Common myeloid progenitor, CD34-positive (primary cell): ENCODE measurements at regions of chr2 and their contacts with region 1.

Region 1: DNA sequence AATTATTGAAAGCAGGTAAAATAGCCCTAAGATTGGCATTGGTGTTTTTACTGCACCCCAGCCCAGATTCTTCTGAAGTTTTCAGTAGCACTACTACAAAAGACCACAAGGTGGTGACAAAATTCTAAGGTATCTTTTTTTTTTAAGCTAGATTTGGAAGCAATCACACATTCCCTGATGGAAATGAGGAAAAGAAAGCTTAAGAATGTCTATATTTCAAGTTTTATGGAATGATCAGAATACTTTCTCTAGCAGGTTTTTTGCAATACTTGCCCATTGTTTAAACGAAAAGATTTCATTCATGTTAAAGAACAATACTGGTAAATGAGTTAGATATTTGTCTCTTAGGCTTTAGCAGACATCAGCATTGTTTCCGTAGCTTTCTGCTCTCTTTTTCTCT is 32.1 kb upstream of the ZNF638 start:
- DNase-seq: peak; percentile 34 to 56 (median 42)
- H3K4me3 ChIP-seq: no peak overlapping the region
- H3K27ac ChIP-seq: no peak overlapping the region
- H3K4me1 ChIP-seq: no peaks in the 10 kb centered on the region
- H3K27me3 ChIP-seq: no peaks in the 10 kb centered on the region

Region 2: GRCh38 chr2:71157124-71157793 is 142.2 kb before region 1 on chr2:
- CTCF ChIA-PET with region 1: interaction called, 14 read pairs
- POLR2A ChIA-PET with region 1: no interaction called
- DNase-seq: peak; percentile 58 to 67 (median 64)
- H3K4me3 ChIP-seq: peak overlapping the region in 3 of 7 experiments; percentile 11 to 55 (median 30)
- H3K27ac ChIP-seq: no peak overlapping the region
- H3K4me1 ChIP-seq: peaks cover 0 to 9% (median 4%) of the 10 kb centered on the region in 4 experiments
- H3K27me3 ChIP-seq: peaks cover 0 to 6% (median 0%) of the 10 kb centered on the region in 5 experiments

Region 3: DNA sequence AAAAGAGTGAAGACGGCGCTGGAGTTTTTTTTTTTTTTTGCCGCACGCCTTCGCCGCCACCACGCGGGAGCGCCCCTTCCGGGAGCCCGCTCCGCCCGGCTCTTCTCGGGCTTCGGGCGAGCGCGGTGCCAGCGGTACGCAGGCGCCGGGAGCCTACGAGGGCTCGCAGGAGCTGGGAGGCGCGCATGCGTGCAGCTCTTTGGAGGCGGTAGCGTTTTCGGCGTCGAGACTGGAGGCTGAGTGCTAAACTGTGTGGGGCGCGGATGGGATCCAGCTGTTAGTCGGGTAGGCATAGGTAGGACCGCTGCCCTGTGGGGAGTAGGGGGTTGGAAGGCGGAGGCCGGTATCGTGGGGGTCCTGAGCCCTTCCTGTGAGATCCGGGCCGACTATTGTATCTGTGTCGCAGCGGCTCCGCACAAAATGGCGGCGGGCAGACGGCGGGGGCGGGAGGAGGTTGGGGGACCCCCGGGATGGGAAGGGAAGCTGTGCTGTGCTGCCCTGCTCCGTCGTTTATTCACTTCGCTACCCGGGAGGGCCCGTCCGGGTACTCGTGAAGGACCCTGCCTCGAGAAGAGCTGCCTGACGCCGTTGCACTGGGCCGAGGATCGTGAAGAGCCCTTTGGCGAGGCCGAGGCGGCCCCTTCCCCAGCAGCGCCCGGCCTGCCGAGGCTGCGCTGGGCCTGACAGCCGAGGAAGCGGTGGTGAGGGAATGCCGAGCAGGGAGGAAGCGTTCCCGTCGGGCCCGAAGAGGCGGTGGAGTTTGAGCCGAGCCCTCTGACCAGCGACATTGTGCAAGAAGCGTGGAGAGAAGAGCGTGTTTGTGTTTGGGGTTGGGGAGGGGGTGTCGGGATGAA is 32.3 kb after region 1 on chr2 and contains the start of gene ZNF638:
- CTCF ChIA-PET with region 1: interaction called, 37 read pairs
- POLR2A ChIA-PET with region 1: no interaction called
- DNase-seq: peak; percentile 93 to 98 (median 96)
- H3K4me3 ChIP-seq: peak within 1 kb of the TSS; percentile 65 to 98 (median 92)
- H3K27ac ChIP-seq: peak within 1 kb of the TSS; percentile 96 to 98
- H3K4me1 ChIP-seq: peaks cover 9 to 30% (median 17%) of the 10 kb centered on the region in 4 experiments
- H3K27me3 ChIP-seq: no peaks in the 10 kb centered on the region

Region 4: DNA sequence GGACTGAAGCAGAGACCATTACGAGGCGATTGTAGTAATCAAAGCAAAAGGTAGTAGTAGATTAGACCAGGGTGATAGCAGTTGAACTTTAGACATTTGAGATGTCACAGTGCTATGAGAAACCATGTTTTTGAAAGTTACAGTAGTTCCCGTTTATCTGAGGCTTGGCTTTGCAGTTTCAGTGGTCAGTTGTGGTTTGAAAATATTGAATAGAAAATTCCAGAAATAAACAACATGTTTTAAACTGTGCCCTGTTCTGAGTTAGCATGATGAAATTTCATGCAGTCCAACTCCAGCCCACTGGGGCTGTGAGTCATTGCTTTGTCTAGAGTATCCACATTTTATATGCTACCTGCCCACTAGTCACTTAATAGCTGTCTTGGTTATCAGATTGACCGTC is 79.6 kb after region 1 on chr2:
- CTCF ChIA-PET with region 1: no interaction called
- POLR2A ChIA-PET with region 1: no interaction called
- DNase-seq: no peak
- H3K4me3 ChIP-seq: no peak overlapping the region
- H3K27ac ChIP-seq: no peak overlapping the region
- H3K4me1 ChIP-seq: peaks cover 0 to 1% (median 0%) of the 10 kb centered on the region in 4 experiments
- H3K27me3 ChIP-seq: no peaks in the 10 kb centered on the region

Region 5: DNA sequence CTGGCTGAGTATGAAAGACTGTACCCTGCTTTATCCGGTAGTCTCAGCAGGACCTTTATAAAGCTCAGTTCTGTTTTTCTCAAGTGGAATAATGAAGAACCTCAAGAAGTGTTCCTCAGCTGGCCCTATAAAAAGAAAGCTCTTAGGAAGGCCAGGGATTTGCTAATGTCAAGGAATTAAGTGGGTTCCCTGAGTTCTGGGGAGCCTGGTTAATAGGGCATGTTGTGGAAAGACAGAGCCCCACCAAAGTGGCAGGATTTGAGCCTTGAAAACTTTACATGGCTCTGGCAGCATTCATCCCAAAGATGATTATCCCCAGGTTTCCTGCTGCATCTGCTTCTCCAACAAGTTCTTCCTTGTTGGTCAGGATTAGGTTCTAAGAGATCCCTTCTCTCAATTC is 147.0 kb after region 1 on chr2:
- CTCF ChIA-PET with region 1: no interaction called
- POLR2A ChIA-PET with region 1: no interaction called
- DNase-seq: no peak
- H3K4me3 ChIP-seq: no peak overlapping the region
- H3K27ac ChIP-seq: no peak overlapping the region
- H3K4me1 ChIP-seq: no peaks in the 10 kb centered on the region
- H3K27me3 ChIP-seq: peaks cover 0 to 2% (median 0%) of the 10 kb centered on the region in 5 experiments